ENCODE measurements at regions of chr2 and their contacts with region 1.

Region 1: DNA sequence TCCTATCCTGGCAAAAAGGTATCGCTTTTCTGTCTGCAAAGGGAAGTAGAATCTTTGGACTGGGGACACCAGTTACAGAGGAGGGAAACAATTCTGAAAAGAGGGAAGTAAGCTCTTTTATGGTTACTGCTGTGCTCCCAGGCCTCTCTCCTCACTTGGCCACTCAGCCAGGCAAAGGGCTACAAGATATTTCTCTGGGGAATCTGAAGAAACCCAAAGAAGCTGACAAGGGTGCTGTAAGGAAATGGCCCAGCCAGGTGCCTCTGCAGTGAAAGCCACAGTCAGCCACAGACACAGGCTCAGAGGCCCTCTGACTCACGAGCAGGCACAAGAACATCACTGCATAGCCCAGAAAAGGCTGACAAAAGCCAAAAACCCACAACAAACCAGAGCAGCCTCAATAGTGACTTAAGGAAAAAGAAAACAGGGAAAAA is 5.8 kb downstream of the HDLBP start:
- DNase-seq: no peak
- ATAC-seq: peak in 3 of 8 donors; percentile 7 to 20 (median 17)
- H3K4me3 ChIP-seq: no peak overlapping the region
- H3K27ac ChIP-seq: peak overlapping the region in 2 of 10 donors; percentile 53 to 78
- H3K4me1 ChIP-seq: peaks cover 0 to 76% (median 40%) of the 10 kb centered on the region in 9 donors
- H3K27me3 ChIP-seq: no peaks in the 10 kb centered on the region
- CTCF ChIP-seq: no peak

Region 2: GRCh38 chr2:241018051-241018891 is 291.4 kb before region 1 on chr2:
- intact Hi-C with region 1: no loop called
- DNase-seq: no peak
- ATAC-seq: peak in 1 of 8 donors; percentile 26
- H3K4me3 ChIP-seq: no peak overlapping the region
- H3K27ac ChIP-seq: no peak overlapping the region
- H3K4me1 ChIP-seq: no peaks in the 10 kb centered on the region
- H3K27me3 ChIP-seq: no peaks in the 10 kb centered on the region
- CTCF ChIP-seq: no peak

Region 3: DNA sequence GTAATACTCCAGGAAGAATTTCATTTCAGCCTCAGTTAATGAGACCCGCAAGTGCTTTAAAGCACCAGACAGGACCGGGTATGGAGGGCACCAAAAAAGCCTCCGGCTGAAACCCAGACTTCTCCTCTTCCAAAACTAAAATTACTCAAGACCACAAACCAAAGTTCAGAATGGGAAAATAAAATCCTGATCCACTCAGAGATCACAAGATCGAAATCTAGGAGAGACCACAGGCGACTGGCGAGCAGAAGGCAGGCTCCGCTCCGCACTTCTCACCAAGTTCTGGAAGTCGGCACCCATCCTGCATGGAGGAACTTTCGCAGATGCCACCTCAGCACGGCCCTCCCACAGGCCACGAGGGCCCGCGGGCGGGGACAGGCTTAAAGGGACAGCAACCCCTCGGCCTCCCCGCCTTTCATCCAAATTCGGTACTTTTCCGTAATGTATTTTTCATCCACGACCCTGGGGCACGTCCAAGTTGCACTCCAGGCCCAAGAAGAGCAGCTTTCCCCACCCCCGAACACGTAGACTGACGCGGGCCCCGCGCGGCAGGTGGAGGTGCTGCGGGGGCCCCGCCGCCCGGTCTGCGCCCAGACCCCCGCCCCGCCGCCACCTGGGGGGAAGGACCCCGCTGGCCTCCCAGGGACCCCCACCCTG is 37.9 kb before region 1 on chr2:
- intact Hi-C with region 1: loop called in 6 of 10 experiments (anchors 2 to 5 kb)
- DNase-seq: peak; percentile 79 to 85
- ATAC-seq: peak; percentile 83 to 93 (median 90)
- H3K4me3 ChIP-seq: peak overlapping the region; percentile 81 to 96 (median 91)
- H3K27ac ChIP-seq: peak overlapping the region; percentile 63 to 96 (median 93)
- H3K4me1 ChIP-seq: peaks cover 6 to 48% (median 39%) of the 10 kb centered on the region in 9 donors
- H3K27me3 ChIP-seq: no peaks in the 10 kb centered on the region
- CTCF ChIP-seq: no peak